ENCODE measurements at regions of chr16 and their contacts with region 1.

Region 1: DNA sequence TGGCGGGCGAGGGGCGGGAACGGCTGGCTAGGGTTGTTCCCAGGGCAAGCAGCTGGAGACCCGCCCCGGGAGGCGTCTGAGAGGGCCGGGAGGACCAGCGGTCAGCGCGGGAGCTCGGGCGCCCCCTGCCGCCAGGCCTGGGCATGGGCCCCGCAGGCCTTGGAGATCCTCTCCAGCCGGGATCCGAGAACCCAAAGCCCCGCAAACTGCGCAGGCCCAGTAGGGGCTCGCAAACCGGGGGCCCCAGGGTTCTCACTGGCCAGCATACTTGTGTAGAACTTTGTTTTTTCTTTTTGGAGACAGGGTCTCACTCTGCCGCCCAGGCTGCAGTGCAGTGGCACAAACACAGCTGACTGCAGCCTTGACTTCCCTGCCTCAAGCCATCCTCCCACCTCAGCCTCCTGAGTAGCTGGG is 20.8 kb upstream of the ZNF423 start:
- DNase-seq: peak; percentile 78 to 84
- ATAC-seq: peak; percentile 81 to 96 (median 92)
- H3K4me3 ChIP-seq: peak overlapping the region; percentile 48
- H3K27ac ChIP-seq: no peak overlapping the region
- H3K4me1 ChIP-seq: no peaks in the 10 kb centered on the region
- H3K27me3 ChIP-seq: peaks cover 0 to 5% (median 0%) of the 10 kb centered on the region in 3 donors
- CTCF ChIP-seq: peak; percentile 87

Region 2: GRCh38 chr16:49602201-49602975 is 274.3 kb before region 1 on chr16:
- intact Hi-C with region 1: loop called in 1 of 2 experiments (anchors 5 kb)
- DNase-seq: peak; percentile 41 to 57
- ATAC-seq: peak; percentile 50 to 67 (median 63)
- H3K4me3 ChIP-seq: peak overlapping the region; percentile 29
- H3K27ac ChIP-seq: peak overlapping the region; percentile 14
- H3K4me1 ChIP-seq: peaks cover 20% of the 10 kb centered on the region
- H3K27me3 ChIP-seq: no peaks in the 10 kb centered on the region
- CTCF ChIP-seq: no peak

Measured in psoas muscle (tissue), 8 donors.